K562 (cell line): ENCODE measurements at regions of chr5 and their contacts with region 1.

Region 1: GRCh38 chr5:44332285-44332971 is 56.8 kb downstream of the FGF10 start:
- DNase-seq: peak; percentile 10 to 31 (median 23)
- ATAC-seq: peak; percentile 61; the same call in 1 of the 3 replicates
- H3K4me3 ChIP-seq: no peak overlapping the region
- H3K27ac ChIP-seq: no peak overlapping the region
- H3K4me1 ChIP-seq: no peaks in the 10 kb centered on the region
- H3K27me3 ChIP-seq: no peaks in the 10 kb centered on the region
- CTCF ChIP-seq: peak; percentile 22 to 44 (median 44); a peak in 4 of 6 replicates
- EP300 ChIP-seq: no peak
- POLR2A ChIP-seq: no peak
- RAD21 ChIP-seq: peak; percentile 68 to 70

Region 2: GRCh38 chr5:43631182-43631910 is 701.1 kb before region 1 on chr5:
- CTCF ChIA-PET with region 1: no interaction called
- POLR2A ChIA-PET with region 1: no interaction called
- in situ Hi-C with region 1: no loop called
- intact Hi-C with region 1: loop called (anchors 1 kb)
- DNase-seq: peak; percentile 67 to 90 (median 75)
- ATAC-seq: peak; percentile 99
- H3K4me3 ChIP-seq: no peak overlapping the region
- H3K27ac ChIP-seq: peak overlapping the region; percentile 37; the same call in 1 of the 3 replicates
- H3K4me1 ChIP-seq: peaks cover 0 to 2% of the 10 kb centered on the region in 2 experiments; a peak in 2 of 5 replicates
- H3K27me3 ChIP-seq: no peaks in the 10 kb centered on the region
- CTCF ChIP-seq: peak; percentile 75 to 90 (median 89)
- EP300 ChIP-seq: no peak
- POLR2A ChIP-seq: no peak
- RAD21 ChIP-seq: peak; percentile 73 to 77

Region 3: DNA sequence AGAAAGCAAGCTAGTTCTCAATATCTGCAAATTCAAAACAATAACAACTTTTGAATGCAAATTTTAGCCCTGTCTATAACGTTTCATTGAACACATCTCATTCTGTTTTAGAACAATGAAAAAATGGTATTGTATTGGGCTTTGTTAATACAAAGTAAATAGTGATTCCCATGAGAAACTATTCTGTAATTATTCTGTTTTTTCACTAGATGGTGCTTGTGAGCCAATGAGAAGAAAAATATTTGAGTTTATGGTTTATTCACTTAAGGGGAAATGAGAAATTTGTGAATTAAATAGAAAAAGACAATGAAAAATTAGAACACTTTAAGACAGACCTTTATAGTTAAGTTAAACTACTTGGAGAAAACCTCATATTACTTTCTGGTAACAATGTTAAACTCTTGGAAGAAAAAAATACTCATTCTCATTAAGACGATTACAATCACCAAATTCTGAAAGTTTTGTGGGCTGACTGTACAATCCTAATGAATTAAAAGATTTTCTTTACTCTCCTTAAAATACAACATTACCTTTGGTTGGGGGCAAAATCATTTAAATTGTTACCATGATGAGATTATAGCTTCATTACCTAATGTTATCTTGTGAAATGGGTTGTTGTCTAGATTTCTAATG is 602.5 kb before region 1 on chr5:
- CTCF ChIA-PET with region 1: interaction called, 3 read pairs
- POLR2A ChIA-PET with region 1: no interaction called
- in situ Hi-C with region 1: no loop called
- intact Hi-C with region 1: loop called (anchors 5 kb)
- DNase-seq: peak in 1 of 4 experiments; percentile 25
- ATAC-seq: peak; percentile 49; the same call in 2 of the 3 replicates
- H3K4me3 ChIP-seq: no peak overlapping the region
- H3K27ac ChIP-seq: no peak overlapping the region
- H3K4me1 ChIP-seq: no peaks in the 10 kb centered on the region
- H3K27me3 ChIP-seq: no peaks in the 10 kb centered on the region
- CTCF ChIP-seq: peak in 2 of 3 experiments; percentile 32 to 68; a peak in 3 of 6 replicates
- EP300 ChIP-seq: no peak
- POLR2A ChIP-seq: no peak
- RAD21 ChIP-seq: peak; percentile 94 to 96

Region 4: GRCh38 chr5:45205403-45205961 is 873.1 kb after region 1 on chr5:
- CTCF ChIA-PET with region 1: no interaction called
- POLR2A ChIA-PET with region 1: no interaction called
- in situ Hi-C with region 1: no loop called
- intact Hi-C with region 1: no loop called
- DNase-seq: no peak
- ATAC-seq: no peak
- H3K4me3 ChIP-seq: no peak overlapping the region
- H3K27ac ChIP-seq: no peak overlapping the region
- H3K4me1 ChIP-seq: no peaks in the 10 kb centered on the region
- H3K27me3 ChIP-seq: no peaks in the 10 kb centered on the region
- CTCF ChIP-seq: no peak
- EP300 ChIP-seq: no peak
- POLR2A ChIP-seq: no peak
- RAD21 ChIP-seq: no peak